ENCODE measurements at regions of chr6 and their contacts with region 1.

Region 1: GRCh38 chr6:63764318-63764916 is 128.8 kb downstream of the PHF3 start:
- DNase-seq: no peak
- ATAC-seq: peak; percentile 41

Region 2: DNA sequence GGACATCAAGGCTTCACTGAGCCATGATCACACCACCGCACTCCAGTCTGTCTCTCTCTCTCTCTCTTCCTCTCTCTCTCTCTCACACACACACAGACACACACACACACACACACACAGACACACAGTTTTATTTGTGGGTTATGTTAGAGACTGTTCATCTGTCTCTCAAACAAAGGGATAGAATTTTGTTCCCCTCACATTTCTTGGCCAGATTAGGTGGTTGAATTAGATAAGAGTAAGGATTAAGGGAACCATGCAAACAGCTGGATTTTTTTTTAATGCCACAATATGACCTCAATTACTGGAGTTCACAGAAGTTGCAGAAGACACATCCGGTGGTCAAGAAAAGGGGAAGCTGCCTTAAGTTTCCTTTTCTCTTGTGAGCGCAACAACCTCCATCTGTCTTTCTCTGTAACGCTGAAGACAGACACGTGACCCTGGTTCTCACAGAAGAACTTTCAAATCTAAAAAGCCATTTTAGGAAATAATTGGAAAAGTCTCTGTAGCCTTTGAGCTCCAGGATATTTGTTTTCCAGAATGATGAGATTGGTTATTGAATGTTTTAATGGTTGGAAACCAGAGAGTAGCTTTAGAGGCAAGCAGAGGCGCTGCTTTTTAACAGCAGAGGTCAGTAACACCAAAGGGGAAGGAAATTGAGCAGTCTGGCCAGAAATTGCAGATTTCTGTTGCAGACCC is 411.7 kb before region 1 on chr6:
- intact Hi-C with region 1: loop called (anchors 5 kb)
- DNase-seq: no peak
- ATAC-seq: peak; percentile 94

Region 3: GRCh38 chr6:63598049-63599036 is 166.1 kb before region 1 on chr6:
- intact Hi-C with region 1: loop called (anchors 5 kb)
- DNase-seq: peak; percentile 68
- ATAC-seq: peak; percentile 98